Prostate gland (tissue), 2 donors: ENCODE measurements at regions of chr7 and their contacts with region 1.

Region 1: GRCh38 chr7:64618785-64619456 is 47.0 kb upstream of the ZNF107 start:
- DNase-seq: peak; percentile 28
- H3K4me3 ChIP-seq: no peak overlapping the region
- H3K27ac ChIP-seq: no peak overlapping the region
- H3K4me1 ChIP-seq: no peaks in the 10 kb centered on the region
- H3K27me3 ChIP-seq: no peaks in the 10 kb centered on the region
- CTCF ChIP-seq: peak; percentile 39 to 73 (median 64)
- POLR2A ChIP-seq: no peak

Region 2: GRCh38 chr7:64183126-64183742 is 435.7 kb before region 1 on chr7:
- intact Hi-C with region 1: loop called (anchors 1 kb)
- DNase-seq: no peak
- H3K4me3 ChIP-seq: no peak overlapping the region
- H3K27ac ChIP-seq: no peak overlapping the region
- H3K4me1 ChIP-seq: no peaks in the 10 kb centered on the region
- H3K27me3 ChIP-seq: no peaks in the 10 kb centered on the region
- CTCF ChIP-seq: peak; percentile 54 to 76 (median 61)
- POLR2A ChIP-seq: no peak